H1 (cell line): ENCODE measurements at regions of chr19 and their contacts with region 1.

Region 1: GRCh38 chr19:39110263-39110967 is 15.2 kb upstream of the PAK4 start:
- DNase-seq: peak in 1 of 2 experiments; percentile 92
- H3K4me3 ChIP-seq: no peak overlapping the region
- H3K27ac ChIP-seq: no peak overlapping the region
- H3K4me1 ChIP-seq: peaks cover 0 to 5% (median 0%) of the 10 kb centered on the region in 4 experiments; a peak in 3 of 7 replicates
- H3K27me3 ChIP-seq: no peaks in the 10 kb centered on the region
- CTCF ChIP-seq: peak; percentile 79 to 87 (median 82)
- EP300 ChIP-seq: no peak
- POLR2A ChIP-seq: no peak
- RAD21 ChIP-seq: peak; percentile 73 to 82

Region 2: GRCh38 chr19:39052243-39052746 is 58.1 kb before region 1 on chr19:
- CTCF ChIA-PET with region 1: interaction called, 24 read pairs
- POLR2A ChIA-PET with region 1: interaction called, 3 read pairs
- DNase-seq: peak; percentile 68 to 95
- H3K4me3 ChIP-seq: no peak overlapping the region
- H3K27ac ChIP-seq: no peak overlapping the region
- H3K4me1 ChIP-seq: no peaks in the 10 kb centered on the region
- H3K27me3 ChIP-seq: no peaks in the 10 kb centered on the region
- CTCF ChIP-seq: peak; percentile 83 to 91 (median 90)
- EP300 ChIP-seq: no peak
- POLR2A ChIP-seq: no peak
- RAD21 ChIP-seq: peak; percentile 76 to 84

Region 3: DNA sequence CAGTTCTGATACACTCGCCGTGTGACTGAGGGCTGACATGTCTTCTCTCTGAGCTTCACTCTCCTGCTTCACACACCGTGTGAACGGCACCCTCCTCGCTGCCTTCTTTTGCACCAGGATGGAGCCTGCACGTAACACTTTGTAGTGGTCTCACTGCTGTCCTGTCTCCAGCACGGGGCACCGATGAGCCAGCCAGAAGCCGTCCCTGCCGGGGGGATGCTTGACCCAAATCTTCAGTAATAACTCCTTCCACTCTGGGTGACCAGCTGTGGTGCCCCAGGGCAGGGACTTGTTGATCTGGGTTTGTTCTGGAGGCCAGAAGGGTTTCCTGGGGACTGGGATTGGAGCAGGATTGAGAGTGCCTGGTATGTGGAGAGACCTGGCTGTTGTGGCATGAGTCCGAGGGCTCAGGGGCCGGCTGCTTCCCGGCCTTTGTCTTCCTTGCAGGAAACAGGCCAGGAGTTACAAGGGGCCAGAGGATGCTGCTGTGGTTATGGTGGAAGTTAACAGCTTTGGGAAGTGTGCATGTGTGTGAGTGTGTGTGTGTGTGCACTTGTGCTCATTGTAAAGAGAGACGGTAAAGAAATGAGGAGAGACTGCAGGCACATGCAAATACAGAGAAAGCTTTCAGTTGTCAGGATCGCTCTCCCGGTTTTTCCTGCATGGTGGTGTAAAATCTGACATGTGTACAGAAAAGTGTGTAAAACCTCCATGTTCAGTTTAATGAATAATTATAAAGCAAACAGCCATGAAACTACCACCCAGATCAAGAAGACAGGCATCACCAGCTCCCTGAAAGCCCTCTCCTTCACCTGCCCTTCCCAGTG is 34.0 kb after region 1 on chr19:
- CTCF ChIA-PET with region 1: interaction called, 11 read pairs
- POLR2A ChIA-PET with region 1: no interaction called
- DNase-seq: no peak
- H3K4me3 ChIP-seq: no peak overlapping the region
- H3K27ac ChIP-seq: no peak overlapping the region
- H3K4me1 ChIP-seq: peaks cover 26 to 52% (median 36%) of the 10 kb centered on the region in 4 experiments
- H3K27me3 ChIP-seq: no peaks in the 10 kb centered on the region
- CTCF ChIP-seq: peak in 1 of 3 experiments; percentile 7; a peak in 1 of 4 replicates
- EP300 ChIP-seq: no peak
- POLR2A ChIP-seq: no peak
- RAD21 ChIP-seq: peak; percentile 19 to 23; a peak in 2 of 4 replicates

Region 4: DNA sequence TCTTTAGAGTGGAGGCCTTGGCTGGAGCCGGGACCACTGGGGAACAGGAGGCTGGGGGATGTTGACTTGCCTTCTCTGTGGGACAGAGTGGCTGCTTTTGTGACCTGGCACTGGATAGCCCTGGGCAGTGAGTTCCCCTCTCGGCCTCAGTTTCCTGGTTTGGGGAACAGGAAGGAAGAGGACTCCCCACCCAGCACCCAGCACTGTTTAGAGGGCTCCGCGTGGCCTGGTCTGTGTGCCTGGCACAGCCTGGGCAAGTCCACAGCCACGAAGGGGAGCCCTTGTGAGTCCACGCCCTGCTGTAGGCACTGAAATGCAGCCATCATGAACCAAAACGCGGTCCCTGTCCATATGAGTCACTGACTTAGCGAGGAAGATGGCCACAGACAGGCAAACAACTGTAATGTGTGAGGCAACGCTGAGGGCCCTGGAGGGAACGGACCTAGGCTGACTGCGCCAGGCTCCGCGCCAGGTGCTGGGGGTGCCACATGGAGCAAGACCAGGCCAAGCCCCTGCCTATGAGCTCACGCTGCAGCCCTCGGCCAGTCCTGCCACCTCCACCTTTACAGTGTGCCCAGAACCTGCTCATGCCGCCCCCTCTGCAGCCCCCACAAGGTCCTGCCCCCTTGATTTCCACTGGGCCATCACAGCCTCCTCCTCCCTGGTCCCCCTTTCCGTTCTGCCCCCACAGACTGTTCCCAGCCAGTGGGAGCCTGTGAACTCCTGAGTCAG is 50.6 kb after region 1 on chr19:
- CTCF ChIA-PET with region 1: no interaction called
- POLR2A ChIA-PET with region 1: no interaction called
- DNase-seq: no peak
- H3K4me3 ChIP-seq: no peak overlapping the region
- H3K27ac ChIP-seq: no peak overlapping the region
- H3K4me1 ChIP-seq: peaks cover 0 to 16% (median 6%) of the 10 kb centered on the region in 4 experiments; a peak in 6 of 7 replicates
- H3K27me3 ChIP-seq: peaks cover 0 to 1% (median 0%) of the 10 kb centered on the region in 4 experiments; a peak in 1 of 7 replicates
- CTCF ChIP-seq: no peak
- EP300 ChIP-seq: no peak
- POLR2A ChIP-seq: no peak
- RAD21 ChIP-seq: no peak

Region 5: DNA sequence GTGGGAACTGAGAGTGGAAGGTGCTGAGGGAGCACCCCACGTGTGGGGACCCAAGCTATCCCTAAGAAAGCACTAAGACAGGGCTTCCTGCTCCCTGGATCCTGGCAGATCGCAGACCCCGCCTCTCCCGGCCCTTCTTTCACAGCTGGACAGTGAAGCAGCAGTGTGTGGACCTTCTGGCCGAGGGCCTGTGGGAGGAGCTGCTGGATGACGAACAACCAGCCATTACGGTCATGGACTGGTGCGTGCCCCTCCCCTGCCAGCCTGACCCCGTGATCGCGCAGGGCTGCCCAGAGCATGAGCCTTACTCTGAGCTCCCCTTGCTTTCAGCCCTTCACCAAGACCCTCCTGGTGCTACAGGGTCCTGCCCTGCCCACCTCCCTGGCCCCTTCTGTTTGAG is 88.6 kb after region 1 on chr19:
- CTCF ChIA-PET with region 1: interaction called, 53 read pairs
- POLR2A ChIA-PET with region 1: no interaction called
- DNase-seq: no peak
- H3K4me3 ChIP-seq: no peak overlapping the region
- H3K27ac ChIP-seq: no peak overlapping the region
- H3K4me1 ChIP-seq: peaks cover 0 to 9% (median 6%) of the 10 kb centered on the region in 4 experiments; a peak in 5 of 7 replicates
- H3K27me3 ChIP-seq: peaks cover 13 to 33% (median 33%) of the 10 kb centered on the region in 4 experiments
- CTCF ChIP-seq: no peak
- EP300 ChIP-seq: no peak
- POLR2A ChIP-seq: no peak
- RAD21 ChIP-seq: no peak